ENCODE measurements at regions of chr17 and their contacts with region 1.

Region 1: GRCh38 chr17:7897773-7898172 is 9.2 kb downstream of the CHD3 start:
- DNase-seq: peak; percentile 55 to 72
- ATAC-seq: peak; percentile 87 to 92
- H3K4me3 ChIP-seq: no peak overlapping the region
- H3K27ac ChIP-seq: no peak overlapping the region
- H3K4me1 ChIP-seq: no peaks in the 10 kb centered on the region
- CTCF ChIP-seq: peak; percentile 64
- EP300 ChIP-seq: no peak
- POLR2A ChIP-seq: no peak
- RAD21 ChIP-seq: peak; percentile 81 to 88

Region 2: GRCh38 chr17:7825206-7825990 is 72.4 kb before region 1 on chr17:
- CTCF ChIA-PET with region 1: interaction called, 11 read pairs
- POLR2A ChIA-PET with region 1: no interaction called
- DNase-seq: peak; percentile 47 to 67
- ATAC-seq: peak; percentile 70 to 78
- H3K4me3 ChIP-seq: no peak overlapping the region
- H3K27ac ChIP-seq: no peak overlapping the region
- H3K4me1 ChIP-seq: no peaks in the 10 kb centered on the region; the same call in 2 of the 3 replicates
- CTCF ChIP-seq: no peak
- EP300 ChIP-seq: no peak
- POLR2A ChIP-seq: no peak
- RAD21 ChIP-seq: no peak

Region 3: GRCh38 chr17:7834962-7835813 is 62.6 kb before region 1 on chr17:
- CTCF ChIA-PET with region 1: interaction called, 24 read pairs
- POLR2A ChIA-PET with region 1: no interaction called
- DNase-seq: peak; percentile 99
- ATAC-seq: peak; percentile 58 to 73
- H3K4me3 ChIP-seq: peak overlapping the region; percentile 60
- H3K27ac ChIP-seq: peak overlapping the region; percentile 82 to 89
- H3K4me1 ChIP-seq: peaks cover 36% of the 10 kb centered on the region
- CTCF ChIP-seq: peak; percentile 87
- EP300 ChIP-seq: no peak
- POLR2A ChIP-seq: peak; percentile 39
- RAD21 ChIP-seq: peak; percentile 83 to 88

Region 4: GRCh38 chr17:7873051-7873450 is 24.7 kb before region 1 on chr17:
- CTCF ChIA-PET with region 1: interaction called, 339 read pairs
- POLR2A ChIA-PET with region 1: no interaction called
- DNase-seq: no peak
- ATAC-seq: peak in 1 of 2 experiments; percentile 23; a peak in 1 of 6 replicates
- H3K4me3 ChIP-seq: no peak overlapping the region
- H3K27ac ChIP-seq: no peak overlapping the region
- H3K4me1 ChIP-seq: no peaks in the 10 kb centered on the region
- CTCF ChIP-seq: no peak
- EP300 ChIP-seq: no peak
- POLR2A ChIP-seq: no peak
- RAD21 ChIP-seq: no peak

Region 5: GRCh38 chr17:7887482-7888183 is 10.1 kb before region 1 on chr17:
- CTCF ChIA-PET with region 1: interaction called, 19 read pairs
- POLR2A ChIA-PET with region 1: no interaction called
- DNase-seq: peak; percentile 96 to 98
- ATAC-seq: peak; percentile 70 to 89
- H3K4me3 ChIP-seq: peak overlapping the region; percentile 70
- H3K27ac ChIP-seq: peak overlapping the region; percentile 98
- H3K4me1 ChIP-seq: peaks cover 35% of the 10 kb centered on the region
- CTCF ChIP-seq: no peak
- EP300 ChIP-seq: no peak
- POLR2A ChIP-seq: peak; percentile 75
- RAD21 ChIP-seq: 0 out of 5 replicates have a peak, but pooled peaks of 1 of the 2 experiments have one; percentile 0

Region 6: DNA sequence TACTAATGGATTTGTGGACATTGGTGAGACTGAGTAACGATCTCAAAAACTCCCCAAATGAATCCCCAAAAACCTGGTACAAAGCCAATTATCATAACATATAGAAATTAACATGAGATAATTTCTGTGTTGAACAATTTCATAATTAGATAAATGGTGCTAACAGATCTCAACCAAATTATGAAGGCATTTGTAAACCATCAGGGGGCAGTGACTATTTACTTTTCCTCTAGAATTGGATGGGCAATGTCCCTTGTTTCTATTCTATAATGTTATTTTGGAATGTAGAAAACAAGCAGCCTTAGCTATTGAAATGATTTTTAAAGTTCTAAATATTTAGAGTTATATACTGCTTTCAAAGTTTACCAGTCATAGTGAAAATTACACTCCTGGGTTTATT is 675.0 kb after region 1 on chr17:
- CTCF ChIA-PET with region 1: no interaction called
- POLR2A ChIA-PET with region 1: no interaction called
- DNase-seq: no peak
- ATAC-seq: no peak
- H3K4me3 ChIP-seq: no peak overlapping the region
- H3K27ac ChIP-seq: no peak overlapping the region
- H3K4me1 ChIP-seq: no peaks in the 10 kb centered on the region
- CTCF ChIP-seq: peak; percentile 22; the same call in 1 of the 3 replicates
- EP300 ChIP-seq: no peak
- POLR2A ChIP-seq: no peak
- RAD21 ChIP-seq: peak; percentile 43 to 48; a peak in 3 of 5 replicates